Left colon (tissue), 2 donors: ENCODE measurements at regions of chr5 and their contacts with region 1.

Region 1: GRCh38 chr5:134145779-134146581 is 30.8 kb downstream of the SKP1 start:
- DNase-seq: peak; percentile 61 to 89
- ATAC-seq: peak; percentile 83

Region 2: GRCh38 chr5:134041570-134042411 is 104.2 kb before region 1 on chr5:
- intact Hi-C with region 1: loop called in 1 of 2 experiments (anchors 5 kb)
- DNase-seq: no peak
- ATAC-seq: no peak

Region 3: GRCh38 chr5:134092878-134093277 is 53.1 kb before region 1 on chr5:
- intact Hi-C with region 1: no loop called
- DNase-seq: peak in 1 of 2 donors; percentile 68
- ATAC-seq: peak; percentile 91